Mammary epithelial cell (primary cell): ENCODE measurements at regions of chr9 and their contacts with region 1.

Region 1: DNA sequence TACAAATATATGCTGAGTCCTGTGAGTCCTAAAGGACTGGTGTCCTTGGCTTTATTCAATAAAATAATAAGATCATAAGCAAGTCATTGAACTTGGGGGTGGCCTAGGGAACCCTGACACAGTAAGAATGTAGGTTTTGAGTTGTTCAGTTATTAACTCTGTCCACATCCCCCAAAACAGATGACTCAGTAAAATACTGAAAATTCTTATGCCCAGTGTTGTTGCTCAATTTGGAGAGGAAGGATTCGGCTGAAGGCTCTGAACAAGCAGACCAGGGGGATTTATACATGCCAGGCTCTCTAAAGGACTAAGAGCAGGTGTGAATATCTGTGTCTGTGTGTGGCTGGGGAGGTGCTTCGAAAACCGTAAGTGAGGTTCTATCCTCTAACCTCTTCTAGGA is 173.7 kb downstream of the RMI1 start:
- DNase-seq: no peak
- H3K4me3 ChIP-seq: no peak overlapping the region
- H3K27ac ChIP-seq: no peak overlapping the region
- H3K4me1 ChIP-seq: no peaks in the 10 kb centered on the region
- H3K27me3 ChIP-seq: no peaks in the 10 kb centered on the region
- CTCF ChIP-seq: no peak

Region 2: GRCh38 chr9:84054341-84055010 is 99.8 kb before region 1 on chr9:
- CTCF ChIA-PET with region 1: no interaction called
- dilution Hi-C with region 1: no loop called
- in situ Hi-C with region 1: no loop called
- intact Hi-C with region 1: loop called (anchors 10 kb)
- DNase-seq: no peak
- H3K4me3 ChIP-seq: no peak overlapping the region
- H3K27ac ChIP-seq: no peak overlapping the region
- H3K4me1 ChIP-seq: no peaks in the 10 kb centered on the region
- H3K27me3 ChIP-seq: no peaks in the 10 kb centered on the region
- CTCF ChIP-seq: no peak